ENCODE measurements at regions of chr13 and their contacts with region 1.

Region 1: DNA sequence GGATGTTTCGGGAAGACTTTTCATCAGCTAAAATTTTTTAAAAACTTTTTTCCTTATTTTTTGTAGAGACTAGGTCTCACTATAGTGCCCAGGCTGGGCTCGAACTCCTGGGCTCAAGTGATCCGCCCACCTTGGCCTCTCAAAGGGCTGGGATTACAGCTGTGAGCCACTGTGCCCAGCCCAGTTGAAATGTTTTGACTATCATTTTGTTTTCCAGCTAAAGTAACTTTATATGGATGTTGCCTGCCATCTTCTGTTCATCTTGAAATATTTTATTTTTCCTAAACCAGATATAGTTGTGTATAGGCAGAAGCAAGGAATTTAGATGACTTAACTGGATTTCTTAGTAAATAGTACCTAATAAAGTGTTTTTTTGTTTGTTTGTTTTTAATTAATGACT is 7.0 kb downstream of the CAB39L start:
- DNase-seq: peak; percentile 30
- H3K4me3 Mint-ChIP-seq: no peak overlapping the region
- H3K27ac Mint-ChIP-seq: peak overlapping the region; percentile 44
- H3K4me1 Mint-ChIP-seq: peaks cover 10% of the 10 kb centered on the region
- H3K27me3 Mint-ChIP-seq: no peaks in the 10 kb centered on the region
- CTCF ChIP-seq: peak; percentile 14

Region 2: DNA sequence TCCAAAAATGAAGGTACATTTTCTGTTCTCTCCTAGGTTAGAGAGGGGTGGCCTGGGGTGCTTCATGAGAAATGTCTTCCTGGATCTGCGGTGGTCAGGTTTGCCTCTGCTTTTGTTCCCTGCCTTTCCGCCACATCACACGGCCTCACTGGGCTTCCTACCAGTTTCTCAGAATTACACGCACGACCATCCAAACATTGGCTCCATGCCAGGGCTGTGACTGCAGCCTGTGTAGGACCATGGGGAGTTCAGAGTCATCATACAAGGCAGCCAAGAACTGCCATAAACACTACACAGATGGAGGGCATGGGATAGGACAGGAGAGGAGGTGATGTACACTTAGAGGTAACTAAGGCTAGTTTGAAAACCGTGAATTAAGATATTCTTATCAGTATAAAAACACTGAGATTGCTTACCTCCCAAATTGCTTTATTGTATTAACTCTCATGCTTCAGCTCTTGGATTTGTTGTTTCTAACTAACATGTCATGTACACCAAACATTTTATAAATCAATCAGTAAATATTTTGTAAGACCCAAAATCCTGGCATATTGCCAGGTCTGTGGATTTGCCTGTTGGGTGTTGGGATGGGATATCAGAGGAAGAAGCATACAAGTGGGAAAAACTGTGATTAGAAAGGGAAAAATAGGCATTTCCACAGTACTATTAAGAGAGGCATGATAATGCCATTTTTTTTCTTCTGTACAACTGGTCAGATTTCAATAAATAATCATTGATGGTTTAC is 144.0 kb before region 1 on chr13:
- CTCF ChIA-PET with region 1: interaction called, 10 read pairs
- POLR2A ChIA-PET with region 1: no interaction called
- intact Hi-C with region 1: no loop called
- DNase-seq: no peak
- H3K4me3 Mint-ChIP-seq: no peak overlapping the region
- H3K27ac Mint-ChIP-seq: no peak overlapping the region
- H3K4me1 Mint-ChIP-seq: no peaks in the 10 kb centered on the region
- H3K27me3 Mint-ChIP-seq: no peaks in the 10 kb centered on the region
- CTCF ChIP-seq: no peak

Region 3: DNA sequence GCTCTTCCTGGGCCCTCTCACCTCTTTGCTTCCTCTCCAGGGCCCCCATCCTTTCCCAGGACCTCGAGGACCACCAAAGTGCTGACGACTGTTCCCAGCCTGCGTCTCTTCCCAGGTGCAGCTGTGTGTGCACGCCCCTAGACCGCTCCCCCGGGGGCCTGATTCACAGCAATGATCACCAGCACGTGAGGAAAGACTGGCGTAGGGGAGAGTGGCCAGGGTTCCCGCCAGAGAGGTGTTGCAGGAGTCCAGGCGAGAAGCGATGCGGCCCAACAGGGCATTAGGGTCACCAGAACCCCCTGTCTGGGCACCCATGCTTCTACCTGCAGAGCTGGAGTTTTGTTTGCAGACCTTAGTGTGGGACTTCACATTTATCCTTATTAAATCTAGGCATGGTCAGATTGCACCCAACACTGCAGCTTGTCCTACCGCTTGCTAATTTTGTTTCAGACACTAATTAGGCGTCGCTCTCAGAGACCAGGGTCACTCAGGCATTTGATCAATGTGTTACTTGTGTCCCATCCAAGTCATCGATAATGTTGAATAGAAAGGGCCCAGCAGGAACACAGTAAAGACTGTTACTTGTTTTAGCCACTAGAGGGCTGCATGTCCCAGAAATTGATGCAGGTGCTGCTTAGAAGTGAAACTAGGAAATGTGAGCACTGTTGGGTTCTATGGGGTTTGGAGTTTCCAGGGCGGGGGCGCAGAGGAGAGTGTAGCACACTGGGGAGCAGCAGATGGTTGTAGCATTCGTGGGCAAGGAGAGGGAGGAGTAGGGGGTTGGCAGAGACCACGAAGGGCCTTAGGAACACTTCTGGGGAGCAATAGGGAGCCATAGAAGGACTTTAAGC is 135.9 kb before region 1 on chr13:
- CTCF ChIA-PET with region 1: interaction called, 7 read pairs
- POLR2A ChIA-PET with region 1: interaction called, 4 read pairs
- intact Hi-C with region 1: loop called (anchors 1 kb)
- DNase-seq: peak; percentile 78
- H3K4me3 Mint-ChIP-seq: peak overlapping the region; percentile 54
- H3K27ac Mint-ChIP-seq: peak overlapping the region; percentile 30
- H3K4me1 Mint-ChIP-seq: peaks cover 23% of the 10 kb centered on the region
- H3K27me3 Mint-ChIP-seq: no peaks in the 10 kb centered on the region
- CTCF ChIP-seq: peak; percentile 74

Region 4: GRCh38 chr13:49476529-49476928 is 39.6 kb after region 1 on chr13:
- CTCF ChIA-PET with region 1: no interaction called
- POLR2A ChIA-PET with region 1: no interaction called
- intact Hi-C with region 1: no loop called
- DNase-seq: no peak
- H3K4me3 Mint-ChIP-seq: no peak overlapping the region
- H3K27ac Mint-ChIP-seq: no peak overlapping the region
- H3K4me1 Mint-ChIP-seq: no peaks in the 10 kb centered on the region
- H3K27me3 Mint-ChIP-seq: no peaks in the 10 kb centered on the region
- CTCF ChIP-seq: no peak

Measured in MCF 10A (cell line).